ENCODE measurements at regions of chr9 and their contacts with region 1.

Region 1: DNA sequence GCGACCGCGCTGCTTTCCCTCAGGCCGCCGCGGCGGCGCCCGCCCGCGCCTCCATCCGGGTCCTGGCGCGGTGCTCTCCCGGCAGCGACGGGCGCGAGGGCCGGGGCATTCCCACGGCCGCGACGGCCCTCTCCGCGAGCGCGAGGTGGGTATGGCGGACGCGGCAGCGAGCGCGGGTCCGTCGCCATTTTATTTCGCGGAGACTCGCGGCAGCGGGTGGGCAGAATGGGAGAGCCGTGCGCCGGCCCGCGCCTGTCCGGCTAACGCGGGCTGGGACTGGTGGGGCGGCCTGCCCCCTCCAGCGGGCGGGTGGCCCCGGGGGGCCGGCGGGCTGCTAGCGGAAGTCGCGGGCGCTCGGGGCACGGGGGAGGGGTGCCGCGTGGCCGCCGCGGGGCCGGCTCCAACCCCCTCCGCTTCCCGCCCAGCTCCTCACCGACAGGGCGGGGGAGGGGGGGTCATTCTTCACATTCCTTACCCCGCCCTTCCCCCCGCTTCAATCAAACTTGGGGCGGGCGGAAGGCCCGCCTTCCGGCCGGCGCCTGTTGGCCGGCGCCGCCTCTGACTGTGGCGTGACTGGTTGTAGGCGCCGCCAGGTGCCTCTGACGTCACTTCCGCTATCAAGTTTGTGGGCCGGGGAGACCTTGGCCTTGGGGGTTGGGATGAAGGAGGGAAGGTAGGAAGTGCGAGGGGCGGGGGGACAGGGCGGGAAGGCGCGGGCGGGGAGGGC is 82.1 kb downstream of the PTPDC1 start:
- DNase-seq: peak; percentile 86 to 98 (median 92)
- ATAC-seq: peak; percentile 60
- H3K4me3 ChIP-seq: peak overlapping the region; percentile 94
- H3K4me3 Mint-ChIP-seq: peak overlapping the region; percentile 100
- H3K27ac ChIP-seq: peak overlapping the region; percentile 86 to 95
- H3K27ac Mint-ChIP-seq: peak overlapping the region; percentile 98
- H3K4me1 ChIP-seq: peaks cover 21% of the 10 kb centered on the region
- H3K4me1 Mint-ChIP-seq: peaks cover 64% of the 10 kb centered on the region
- H3K27me3 ChIP-seq: no peaks in the 10 kb centered on the region
- H3K27me3 Mint-ChIP-seq: no peaks in the 10 kb centered on the region
- CTCF ChIP-seq: no peak

Region 2: GRCh38 chr9:92293452-92294296 is 1872.7 kb before region 1 on chr9 and contains the start of gene IARS1:
- CTCF ChIA-PET with region 1: no interaction called
- POLR2A ChIA-PET with region 1: no interaction called
- intact Hi-C with region 1: loop called in 1 of 2 experiments (anchors 10 kb)
- DNase-seq: peak; percentile 97 to 100 (median 99)
- ATAC-seq: peak; percentile 93
- H3K4me3 ChIP-seq: peak within 1 kb of the TSS; percentile 70
- H3K4me3 Mint-ChIP-seq: peak within 1 kb of the TSS; percentile 98
- H3K27ac ChIP-seq: peak within 1 kb of the TSS; percentile 73 to 74
- H3K27ac Mint-ChIP-seq: peak within 1 kb of the TSS; percentile 97
- H3K4me1 ChIP-seq: peaks cover 25% of the 10 kb centered on the region
- H3K4me1 Mint-ChIP-seq: peaks cover 69% of the 10 kb centered on the region
- H3K27me3 ChIP-seq: no peaks in the 10 kb centered on the region
- H3K27me3 Mint-ChIP-seq: no peaks in the 10 kb centered on the region
- CTCF ChIP-seq: no peak
- total RNA-seq, gene IARS1: 49.8 to 56.8 TPM

Region 3: GRCh38 chr9:92877531-92878430 is 1288.6 kb before region 1 on chr9 and contains the start of gene ZNF484:
- CTCF ChIA-PET with region 1: no interaction called
- POLR2A ChIA-PET with region 1: no interaction called
- intact Hi-C with region 1: loop called in 1 of 2 experiments (anchors 2 kb)
- DNase-seq: peak; percentile 94 to 100 (median 98)
- ATAC-seq: peak; percentile 96
- H3K4me3 ChIP-seq: peak within 1 kb of the TSS; percentile 72
- H3K4me3 Mint-ChIP-seq: peak within 1 kb of the TSS; percentile 98
- H3K27ac ChIP-seq: peak within 1 kb of the TSS; percentile 61 to 78
- H3K27ac Mint-ChIP-seq: peak within 1 kb of the TSS; percentile 96
- H3K4me1 ChIP-seq: peaks cover 8% of the 10 kb centered on the region
- H3K4me1 Mint-ChIP-seq: peaks cover 61% of the 10 kb centered on the region
- H3K27me3 ChIP-seq: no peaks in the 10 kb centered on the region
- H3K27me3 Mint-ChIP-seq: no peaks in the 10 kb centered on the region
- CTCF ChIP-seq: no peak
- total RNA-seq, gene ZNF484: 13.3 to 13.6 TPM

Region 4: GRCh38 chr9:93575796-93576257 is 590.6 kb before region 1 on chr9:
- CTCF ChIA-PET with region 1: no interaction called
- POLR2A ChIA-PET with region 1: no interaction called
- intact Hi-C with region 1: loop called (anchors 5 kb)
- DNase-seq: peak in 13 of 14 experiments; percentile 25 to 72 (median 45)
- ATAC-seq: peak; percentile 44
- H3K4me3 ChIP-seq: peak overlapping the region; percentile 75
- H3K4me3 Mint-ChIP-seq: peak overlapping the region; percentile 95
- H3K27ac ChIP-seq: peak overlapping the region; percentile 51 to 56
- H3K27ac Mint-ChIP-seq: peak overlapping the region; percentile 95
- H3K4me1 ChIP-seq: peaks cover 33% of the 10 kb centered on the region
- H3K4me1 Mint-ChIP-seq: peaks cover 51% of the 10 kb centered on the region
- H3K27me3 ChIP-seq: no peaks in the 10 kb centered on the region
- H3K27me3 Mint-ChIP-seq: no peaks in the 10 kb centered on the region
- CTCF ChIP-seq: no peak

Region 5: DNA sequence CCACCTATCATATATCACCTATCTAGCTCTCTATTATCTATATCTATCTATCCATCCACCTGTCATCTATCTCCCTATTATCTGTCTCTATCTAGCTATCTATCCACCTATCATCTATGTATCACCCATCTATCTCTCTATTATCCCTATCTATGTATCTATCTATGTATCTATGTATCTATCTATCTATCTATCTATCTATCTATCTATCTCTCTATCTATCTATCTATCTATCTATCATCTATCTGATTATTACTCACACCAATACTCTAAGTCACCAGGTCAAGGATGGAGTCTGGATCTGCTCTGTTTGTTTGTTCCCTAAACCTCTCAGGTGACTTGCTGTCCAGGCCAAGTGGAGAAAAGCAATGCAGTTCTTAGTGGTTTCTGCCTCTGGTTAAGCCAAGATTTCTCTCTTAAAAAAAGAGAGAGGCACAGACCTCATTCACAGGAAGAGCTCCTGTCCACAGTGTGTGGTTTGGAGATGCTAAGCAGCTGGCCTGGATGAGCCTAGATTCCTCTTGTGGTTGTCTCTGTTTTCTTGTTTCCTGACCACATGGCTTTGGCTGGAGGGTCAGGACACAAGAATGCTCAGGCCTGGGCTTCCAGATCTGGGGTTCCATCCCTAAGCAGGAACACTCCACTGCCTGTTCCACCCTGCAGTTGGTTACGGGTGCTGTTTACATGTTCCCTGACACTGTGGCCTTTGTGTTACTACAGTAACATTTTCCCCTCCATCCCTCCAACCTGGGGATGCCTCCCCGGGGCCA is 456.6 kb before region 1 on chr9:
- CTCF ChIA-PET with region 1: no interaction called
- POLR2A ChIA-PET with region 1: no interaction called
- intact Hi-C with region 1: no loop called
- DNase-seq: no peak
- ATAC-seq: no peak
- H3K4me3 ChIP-seq: no peak overlapping the region
- H3K4me3 Mint-ChIP-seq: no peak overlapping the region
- H3K27ac ChIP-seq: no peak overlapping the region
- H3K27ac Mint-ChIP-seq: no peak overlapping the region
- H3K4me1 ChIP-seq: no peaks in the 10 kb centered on the region
- H3K4me1 Mint-ChIP-seq: no peaks in the 10 kb centered on the region
- H3K27me3 ChIP-seq: no peaks in the 10 kb centered on the region
- H3K27me3 Mint-ChIP-seq: peaks cover 15% of the 10 kb centered on the region
- CTCF ChIP-seq: no peak

Region 6: GRCh38 chr9:94030318-94031179 is 135.9 kb before region 1 on chr9:
- CTCF ChIA-PET with region 1: no interaction called
- POLR2A ChIA-PET with region 1: interaction called, 4 read pairs
- intact Hi-C with region 1: loop called (anchors 2 to 5 kb)
- DNase-seq: peak; percentile 53 to 90 (median 72)
- ATAC-seq: peak; percentile 99
- H3K4me3 ChIP-seq: peak overlapping the region; percentile 74
- H3K4me3 Mint-ChIP-seq: peak overlapping the region; percentile 94
- H3K27ac ChIP-seq: peak overlapping the region; percentile 18 to 46
- H3K27ac Mint-ChIP-seq: peak overlapping the region; percentile 76
- H3K4me1 ChIP-seq: peaks cover 15% of the 10 kb centered on the region
- H3K4me1 Mint-ChIP-seq: peaks cover 23% of the 10 kb centered on the region
- H3K27me3 ChIP-seq: no peaks in the 10 kb centered on the region
- H3K27me3 Mint-ChIP-seq: no peaks in the 10 kb centered on the region
- CTCF ChIP-seq: no peak

Region 7: GRCh38 chr9:94259077-94259892 is 92.9 kb after region 1 on chr9 and contains the start of gene ZNF169:
- CTCF ChIA-PET with region 1: no interaction called
- POLR2A ChIA-PET with region 1: interaction called, 3 read pairs
- intact Hi-C with region 1: loop called (anchors 2 kb)
- DNase-seq: peak; percentile 74 to 91 (median 82)
- ATAC-seq: peak; percentile 100
- H3K4me3 ChIP-seq: peak within 1 kb of the TSS; percentile 98
- H3K4me3 Mint-ChIP-seq: peak within 1 kb of the TSS; percentile 98
- H3K27ac ChIP-seq: peak within 1 kb of the TSS; percentile 35 to 38
- H3K27ac Mint-ChIP-seq: peak within 1 kb of the TSS; percentile 88
- H3K4me1 ChIP-seq: peaks cover 21% of the 10 kb centered on the region
- H3K4me1 Mint-ChIP-seq: peaks cover 46% of the 10 kb centered on the region
- H3K27me3 ChIP-seq: peaks cover 0 to 6% of the 10 kb centered on the region in 2 experiments
- H3K27me3 Mint-ChIP-seq: peaks cover 5% of the 10 kb centered on the region
- CTCF ChIP-seq: no peak
- total RNA-seq, gene ZNF169: 3.5 to 5.1 TPM